Activated CD4-positive, alpha-beta memory T cell treated with anti-CD3 and anti-CD28 coated beads for 36 hours (primary cell): ENCODE measurements at regions of chr2 and their contacts with region 1.

Region 1: DNA sequence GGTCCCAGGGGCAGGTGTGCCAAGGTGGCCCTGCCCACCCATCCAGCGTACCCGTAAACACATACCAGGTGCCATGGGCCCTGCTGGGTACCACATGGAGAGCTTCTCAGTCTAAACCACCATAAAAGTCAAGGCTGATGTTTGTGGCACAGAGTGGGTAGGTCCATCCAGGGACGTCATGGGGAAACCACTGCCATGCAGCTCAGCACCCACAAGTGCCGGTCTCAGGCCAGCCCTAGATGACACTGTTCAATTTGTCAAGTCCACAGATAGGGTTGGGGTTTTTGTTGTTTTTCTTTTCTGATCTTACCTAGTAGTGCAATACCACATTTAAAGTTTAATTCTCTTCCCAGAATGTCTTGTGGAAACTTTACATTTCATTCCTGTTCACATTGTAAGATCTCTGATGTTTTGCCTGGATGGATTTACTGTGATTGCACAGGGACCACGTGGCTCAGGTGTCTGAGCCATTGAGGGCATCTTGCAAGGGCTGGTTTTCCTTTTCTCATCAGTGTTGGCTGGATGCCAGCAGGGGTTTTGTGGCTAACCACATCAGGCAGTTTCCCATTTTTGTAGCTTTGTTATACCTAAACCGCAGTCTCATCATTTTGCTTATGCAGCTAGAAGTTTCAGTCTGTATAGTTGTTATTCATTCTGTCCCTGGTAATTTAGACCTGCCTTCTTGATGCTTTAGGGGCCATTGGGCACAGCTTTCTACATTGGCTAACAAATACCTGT is 64.7 kb downstream of the STK25 start:
- DNase-seq: peak; percentile 97
- H3K4me3 Mint-ChIP-seq: peak overlapping the region; percentile 5
- H3K27ac Mint-ChIP-seq: peak overlapping the region; percentile 64
- H3K4me1 Mint-ChIP-seq: peaks cover 23% of the 10 kb centered on the region
- H3K27me3 Mint-ChIP-seq: peaks cover 52% of the 10 kb centered on the region

Region 2: DNA sequence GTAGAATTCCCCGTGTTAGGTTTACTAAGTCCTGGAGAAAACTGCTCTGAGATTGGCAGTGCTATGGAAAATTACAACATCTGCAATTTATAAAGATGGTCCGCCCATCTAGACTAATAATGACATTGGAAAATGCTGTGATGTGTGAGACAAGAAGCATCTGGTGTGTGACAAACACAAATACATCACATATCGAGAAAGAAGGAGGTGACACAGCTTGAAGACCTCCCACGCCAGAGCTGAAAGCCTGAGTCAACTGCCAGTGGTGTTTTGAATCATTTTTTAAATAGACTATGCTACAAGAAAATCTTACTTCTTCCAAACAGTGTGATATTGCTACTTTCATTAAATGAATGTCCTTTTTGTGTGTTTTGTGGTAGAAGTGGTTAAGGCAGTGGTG is 263.8 kb before region 1 on chr2:
- CTCF ChIA-PET with region 1: no interaction called
- POLR2A ChIA-PET with region 1: no interaction called
- intact Hi-C with region 1: loop called (anchors 1 kb)
- DNase-seq: peak; percentile 78
- H3K4me3 Mint-ChIP-seq: no peak overlapping the region
- H3K27ac Mint-ChIP-seq: peak overlapping the region; percentile 69
- H3K4me1 Mint-ChIP-seq: peaks cover 19% of the 10 kb centered on the region
- H3K27me3 Mint-ChIP-seq: no peaks in the 10 kb centered on the region